Activated naive CD4-positive, alpha-beta T cell treated with anti-CD3 and anti-CD28 coated beads for 36 hours (primary cell): ENCODE measurements at regions of chr14 and their contacts with region 1.

Region 1: DNA sequence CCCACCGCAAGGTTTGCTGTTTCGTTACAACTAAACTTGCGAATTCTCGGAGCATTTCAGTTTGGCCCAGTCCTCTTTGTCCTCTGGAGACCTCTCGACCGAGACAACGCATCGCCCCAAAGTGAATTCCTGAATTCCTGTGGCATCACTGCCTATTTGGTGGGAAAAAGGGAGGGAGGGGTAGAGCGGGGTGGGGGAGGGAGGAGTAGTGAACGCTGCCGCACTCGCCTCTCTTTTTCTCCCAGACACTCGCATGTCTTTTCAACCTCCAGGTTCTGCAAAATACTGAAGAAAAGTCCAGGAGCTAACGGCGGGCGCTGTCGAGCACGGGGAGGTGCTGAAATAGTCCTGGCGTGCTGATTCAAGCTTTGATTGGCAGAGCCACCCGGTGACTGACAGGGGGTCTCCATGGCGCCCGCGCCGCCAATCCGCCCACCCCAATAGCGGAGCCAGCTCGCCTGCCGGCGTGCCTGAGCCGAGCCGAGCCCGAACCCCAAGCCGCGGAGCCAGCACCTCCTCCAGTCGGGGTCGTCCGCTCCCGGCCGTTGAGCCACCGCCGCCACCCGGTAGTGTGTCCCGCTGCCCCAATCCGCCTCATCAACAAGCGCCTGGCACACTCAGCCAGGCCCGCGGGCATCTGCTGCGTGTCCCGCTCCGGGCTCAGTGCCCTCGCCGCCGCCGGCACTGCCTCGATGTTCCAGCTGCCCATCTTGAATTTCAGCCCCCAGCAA is at the start of gene SIX6:
- DNase-seq: no peak
- H3K4me3 Mint-ChIP-seq: no peak within 1 kb of the TSS
- H3K27ac Mint-ChIP-seq: no peak within 1 kb of the TSS
- H3K4me1 Mint-ChIP-seq: peaks cover 30% of the 10 kb centered on the region
- H3K27me3 Mint-ChIP-seq: peaks cover 81% of the 10 kb centered on the region
- total RNA-seq, gene SIX6: not detected

Region 2: DNA sequence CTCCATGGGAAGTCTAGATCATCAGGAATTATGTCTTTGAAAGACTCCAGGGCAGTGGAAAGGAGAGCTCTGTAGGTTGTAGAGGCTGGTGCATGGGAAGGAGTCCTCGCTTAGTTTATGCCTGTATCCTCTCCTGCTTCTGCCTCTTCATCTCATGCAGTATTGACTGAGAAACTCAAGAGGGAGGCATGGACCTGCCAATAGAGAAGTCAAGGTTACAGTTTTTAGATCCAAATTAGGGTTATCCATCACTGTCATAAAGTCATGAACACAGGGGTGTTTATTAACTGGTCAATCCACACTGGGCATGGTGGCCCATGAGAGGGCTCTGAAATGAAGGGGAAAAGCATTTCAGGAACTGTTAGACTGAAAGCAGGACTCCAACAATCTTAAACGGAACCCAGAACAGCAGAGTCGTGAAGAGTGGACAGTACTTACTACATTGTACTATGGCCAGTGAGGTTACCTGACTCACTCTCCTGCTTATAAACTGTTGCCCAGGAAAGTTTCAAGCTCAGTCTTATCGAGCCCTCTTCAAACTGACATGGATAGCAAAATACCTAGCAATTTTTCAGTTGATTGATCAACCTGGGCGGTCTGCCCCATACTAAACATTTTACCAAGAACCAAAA is 313.6 kb before region 1 on chr14:
- CTCF ChIA-PET with region 1: no interaction called
- intact Hi-C with region 1: loop called (anchors 10 kb)
- DNase-seq: no peak
- H3K4me3 Mint-ChIP-seq: no peak overlapping the region
- H3K27ac Mint-ChIP-seq: no peak overlapping the region
- H3K4me1 Mint-ChIP-seq: peaks cover 11% of the 10 kb centered on the region
- H3K27me3 Mint-ChIP-seq: peaks cover 10% of the 10 kb centered on the region

Region 3: DNA sequence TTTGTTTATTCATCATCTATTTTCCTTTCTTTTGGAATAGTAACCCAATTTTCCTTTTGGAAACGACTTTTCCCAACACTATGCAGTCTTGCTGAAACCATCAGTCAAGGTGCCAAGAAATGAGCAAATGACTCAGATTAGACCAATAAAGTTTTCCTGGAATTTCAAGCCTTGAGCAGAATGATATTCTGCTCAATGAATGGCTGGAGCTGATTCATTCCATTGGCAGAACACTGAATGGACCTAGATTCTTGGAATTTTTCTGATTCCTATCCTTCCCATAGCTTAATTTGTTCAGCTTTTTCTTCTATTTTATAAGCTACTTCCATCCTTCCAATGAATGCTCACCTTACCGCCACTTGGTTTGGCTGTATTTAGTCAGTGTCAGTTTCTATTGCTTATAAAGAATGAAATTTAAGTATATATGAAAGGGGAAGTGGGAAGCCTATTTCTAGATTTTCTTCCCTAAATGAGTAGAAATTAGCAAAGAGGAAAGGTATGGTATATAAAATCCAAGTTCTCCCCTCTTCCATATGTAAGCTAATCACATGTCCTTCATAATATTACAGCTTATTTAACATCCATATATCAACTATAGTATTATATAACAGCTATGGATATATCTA is 112.0 kb before region 1 on chr14:
- CTCF ChIA-PET with region 1: no interaction called
- intact Hi-C with region 1: no loop called
- DNase-seq: no peak
- H3K4me3 Mint-ChIP-seq: no peak overlapping the region
- H3K27ac Mint-ChIP-seq: no peak overlapping the region
- H3K4me1 Mint-ChIP-seq: no peaks in the 10 kb centered on the region
- H3K27me3 Mint-ChIP-seq: peaks cover 7% of the 10 kb centered on the region

Region 4: DNA sequence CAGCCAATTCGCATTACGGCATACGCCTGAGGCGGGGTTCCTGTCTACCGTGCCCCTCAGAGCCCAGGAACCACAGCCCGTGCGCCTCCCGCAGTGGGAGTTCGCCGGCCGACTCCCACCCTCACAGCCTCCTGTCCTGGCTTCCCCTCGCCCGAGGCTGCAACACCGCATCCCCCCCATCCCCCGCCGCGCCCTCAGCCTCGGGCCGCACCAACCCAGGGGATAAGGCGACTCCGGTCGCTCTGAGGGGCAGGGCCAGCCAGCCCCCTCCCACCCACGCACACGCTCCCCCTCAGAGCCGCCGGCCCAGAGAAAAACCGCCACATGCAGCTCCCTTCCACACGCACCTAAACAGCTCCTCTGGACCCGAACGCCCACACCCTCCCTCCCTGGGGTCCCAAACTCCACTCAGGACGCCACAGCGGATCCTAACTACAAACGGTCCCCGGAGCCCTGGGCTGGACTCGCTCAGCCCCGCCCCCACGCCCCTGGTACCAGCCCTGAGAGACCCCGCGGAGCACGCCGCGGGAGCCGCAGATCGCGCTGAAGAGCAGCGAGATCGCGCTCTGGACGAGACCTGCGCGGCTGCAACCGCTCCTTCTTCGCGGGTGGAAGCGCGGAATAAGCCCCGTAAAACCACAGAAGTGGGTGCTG is 23.1 kb before region 1 on chr14 and contains the start of gene C14orf39:
- CTCF ChIA-PET with region 1: no interaction called
- intact Hi-C with region 1: loop called (anchors 2 kb)
- DNase-seq: peak; percentile 21
- H3K4me3 Mint-ChIP-seq: no peak within 1 kb of the TSS
- H3K27ac Mint-ChIP-seq: no peak within 1 kb of the TSS
- H3K4me1 Mint-ChIP-seq: peaks cover 2% of the 10 kb centered on the region
- H3K27me3 Mint-ChIP-seq: peaks cover 27% of the 10 kb centered on the region
- total RNA-seq, gene C14orf39: not detected